ENCODE measurements at regions of chr1 and their contacts with region 1.

Region 1: GRCh38 chr1:93768380-93768863 is 86.8 kb upstream of the BCAR3 start:
- DNase-seq: peak in 1 of 3 donors; percentile 55
- ATAC-seq: peak; percentile 8 to 63
- H3K4me3 ChIP-seq: no peak overlapping the region
- H3K27ac ChIP-seq: peak overlapping the region; percentile 26
- H3K4me1 ChIP-seq: peaks cover 9% of the 10 kb centered on the region
- H3K27me3 ChIP-seq: no peaks in the 10 kb centered on the region

Region 2: DNA sequence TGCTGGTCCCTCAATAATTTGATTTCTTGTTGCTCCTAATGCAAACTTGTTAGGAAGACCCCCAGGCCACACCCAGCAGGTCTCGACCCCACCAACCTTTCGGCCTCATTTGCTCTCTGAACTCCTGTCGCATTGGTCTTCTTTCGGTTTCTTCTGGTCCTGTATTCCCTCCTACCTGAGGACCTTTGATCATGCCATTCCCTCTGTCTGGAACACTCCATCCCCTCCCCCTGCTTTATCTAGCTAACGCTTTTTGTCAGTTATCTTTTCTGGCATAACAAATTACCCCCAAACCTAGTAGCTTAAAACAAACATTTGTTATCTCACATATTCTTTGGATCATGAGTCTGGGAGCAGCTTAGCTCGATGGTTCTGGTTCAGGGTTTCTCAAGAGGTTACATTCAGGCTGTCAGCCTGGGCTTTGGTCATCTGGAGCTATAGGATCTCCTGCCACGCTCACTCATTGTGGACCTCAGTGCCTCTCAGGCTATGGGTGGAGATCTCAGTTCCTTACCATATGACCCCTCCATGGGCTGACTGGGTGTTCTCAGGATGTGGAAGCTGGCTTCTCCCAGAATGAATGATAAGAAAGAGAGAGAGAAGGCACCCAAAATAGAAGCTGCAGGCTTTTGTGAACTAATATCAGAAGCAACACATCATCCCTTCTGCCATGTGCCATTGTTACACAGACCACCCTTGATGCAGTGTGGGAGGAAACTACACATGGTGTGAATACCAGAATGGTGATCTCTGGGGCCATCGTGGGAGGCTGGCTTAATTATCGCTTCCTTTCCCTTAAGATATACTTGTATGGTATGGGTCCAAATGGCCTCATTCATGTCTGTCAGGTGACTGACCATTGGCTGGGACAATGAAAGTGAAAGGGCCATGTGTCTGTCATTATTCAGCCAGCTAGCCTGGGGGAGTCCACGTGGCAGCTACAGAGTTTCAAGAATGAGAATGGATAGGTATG is 57.6 kb before region 1 on chr1:
- intact Hi-C with region 1: no loop called
- DNase-seq: no peak
- ATAC-seq: peak in 1 of 2 donors; percentile 22
- H3K4me3 ChIP-seq: no peak overlapping the region
- H3K27ac ChIP-seq: no peak overlapping the region
- H3K4me1 ChIP-seq: peaks cover 15% of the 10 kb centered on the region
- H3K27me3 ChIP-seq: no peaks in the 10 kb centered on the region

Region 3: GRCh38 chr1:93722081-93723031 is 46.1 kb before region 1 on chr1:
- intact Hi-C with region 1: loop called in 1 of 4 experiments (anchors 5 kb)
- DNase-seq: peak; percentile 56 to 90 (median 79)
- ATAC-seq: peak; percentile 83 to 84
- H3K4me3 ChIP-seq: no peak overlapping the region
- H3K27ac ChIP-seq: peak overlapping the region; percentile 83
- H3K4me1 ChIP-seq: peaks cover 21% of the 10 kb centered on the region
- H3K27me3 ChIP-seq: no peaks in the 10 kb centered on the region